PC-9 (cell line): ENCODE measurements at regions of chr1 and their contacts with region 1.

Region 1: DNA sequence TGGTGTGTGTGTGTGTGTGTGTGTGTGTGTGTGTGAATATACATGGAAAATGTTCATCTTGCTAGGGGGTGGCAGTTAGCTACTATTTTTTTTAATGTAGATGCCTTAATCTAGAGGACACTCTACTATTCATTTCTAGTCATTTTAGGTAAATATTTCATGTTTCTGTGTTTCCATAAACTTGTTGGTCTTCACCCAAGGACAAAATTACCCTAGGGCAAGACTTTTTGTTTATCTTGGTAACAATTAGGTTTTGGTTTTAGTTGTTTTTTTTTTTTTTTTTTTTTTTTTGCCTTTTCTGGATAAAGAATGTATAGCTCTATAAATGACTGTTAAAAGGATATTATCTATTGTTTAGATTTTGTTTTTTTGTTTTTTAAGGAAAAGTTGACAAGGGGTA is 32.2 kb downstream of the CLEC20A start:
- DNase-seq: no peak
- H3K4me3 ChIP-seq: no peak overlapping the region
- H3K27ac ChIP-seq: no peak overlapping the region
- H3K4me1 ChIP-seq: no peaks in the 10 kb centered on the region
- H3K27me3 ChIP-seq: no peaks in the 10 kb centered on the region
- CTCF ChIP-seq: no peak

Region 2: GRCh38 chr1:178330153-178330552 is 134.4 kb before region 1 on chr1:
- CTCF ChIA-PET with region 1: no interaction called
- POLR2A ChIA-PET with region 1: interaction called, 42 read pairs
- intact Hi-C with region 1: no loop called
- DNase-seq: peak in 1 of 2 experiments; percentile 75
- H3K4me3 ChIP-seq: no peak overlapping the region
- H3K27ac ChIP-seq: no peak overlapping the region
- H3K4me1 ChIP-seq: peaks cover 20% of the 10 kb centered on the region
- H3K27me3 ChIP-seq: no peaks in the 10 kb centered on the region
- CTCF ChIP-seq: no peak